Left ventricle myocardium inferior (tissue), 1 donor: ENCODE measurements at regions of chr13 and their contacts with region 1.

Region 1: DNA sequence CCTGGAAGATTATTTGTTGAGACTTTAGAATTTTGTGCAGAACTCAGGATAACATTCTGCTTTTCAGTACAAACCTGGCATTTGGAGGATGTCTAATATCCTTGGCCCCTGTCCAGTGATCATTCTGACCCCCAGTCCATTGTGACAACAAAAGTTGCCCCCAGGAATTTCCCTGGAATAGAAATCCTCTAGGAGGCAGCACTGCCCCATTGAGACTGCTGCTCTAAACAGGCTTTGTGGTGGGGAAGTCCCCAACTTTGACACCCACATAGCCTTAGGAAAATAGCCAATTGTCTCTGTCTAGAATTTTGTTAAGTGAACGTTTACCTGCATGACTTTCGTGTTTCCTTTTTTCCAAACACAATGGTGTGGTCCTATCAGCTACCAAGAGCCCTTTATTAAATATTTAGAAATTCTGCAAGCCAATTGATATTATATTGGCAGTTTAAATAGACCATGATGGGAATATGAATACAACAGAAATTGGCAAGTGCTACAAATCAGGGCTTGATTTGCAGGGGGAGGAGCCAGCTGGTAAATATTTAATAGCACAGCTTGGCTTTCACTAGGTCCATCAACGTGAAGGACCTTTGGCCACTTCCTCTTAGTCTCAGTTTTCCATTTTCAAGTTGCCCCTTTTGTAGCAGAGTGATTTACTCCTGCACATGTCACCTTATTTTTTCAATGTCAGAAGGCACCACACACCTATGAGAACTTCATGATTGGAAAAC is 451.7 kb downstream of the EFNB2 start:
- DNase-seq: no peak
- H3K4me3 ChIP-seq: no peak overlapping the region
- H3K27ac ChIP-seq: no peak overlapping the region
- H3K4me1 ChIP-seq: no peaks in the 10 kb centered on the region
- H3K27me3 ChIP-seq: peaks cover 15% of the 10 kb centered on the region
- CTCF ChIP-seq: peak; percentile 69

Region 2: GRCh38 chr13:106493533-106494220 is 409.9 kb after region 1 on chr13:
- intact Hi-C with region 1: no loop called
- DNase-seq: no peak
- H3K4me3 ChIP-seq: no peak overlapping the region
- H3K27ac ChIP-seq: peak overlapping the region; percentile 55
- H3K4me1 ChIP-seq: peaks cover 73% of the 10 kb centered on the region
- H3K27me3 ChIP-seq: no peaks in the 10 kb centered on the region
- CTCF ChIP-seq: no peak

Region 3: DNA sequence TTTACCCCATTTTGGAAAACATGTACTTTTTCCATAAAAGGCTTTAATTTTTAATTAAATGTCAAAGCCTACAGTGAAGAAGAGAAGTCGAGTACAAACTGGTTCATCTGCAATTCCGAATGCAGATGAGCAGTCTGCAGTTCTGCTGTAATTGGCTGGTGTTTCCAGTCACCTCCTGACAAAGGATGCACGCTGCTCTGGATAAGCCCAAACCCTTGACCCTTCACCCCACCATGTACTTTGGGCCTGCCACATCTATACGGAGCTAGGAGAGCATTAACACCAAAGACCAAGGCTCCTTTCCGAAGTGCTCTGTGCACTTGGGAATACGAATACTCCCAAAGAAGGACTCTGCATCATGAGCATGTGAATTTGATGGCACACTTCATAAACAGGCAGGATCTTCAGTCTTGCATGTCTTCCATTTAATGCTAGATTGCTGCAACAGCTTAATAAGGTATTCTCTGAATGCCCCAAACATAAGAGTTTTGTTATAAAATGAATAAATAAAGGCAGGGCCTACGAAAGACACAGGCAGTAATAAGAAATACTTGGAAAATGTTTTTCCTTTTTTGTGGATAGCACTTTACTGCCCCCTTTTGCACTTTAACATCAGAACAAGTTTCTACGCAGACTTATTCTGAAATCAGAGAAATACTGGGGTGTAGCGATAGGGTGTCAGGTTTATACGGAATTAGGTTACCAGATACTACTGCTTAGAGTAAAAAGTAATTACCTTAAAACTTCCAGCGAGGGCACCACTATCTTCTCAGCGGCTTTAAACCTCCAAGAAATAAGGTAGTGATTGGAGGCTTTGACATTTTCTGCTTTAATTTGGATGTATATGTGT is 436.6 kb after region 1 on chr13:
- intact Hi-C with region 1: loop called (anchors 10 kb)
- DNase-seq: no peak
- H3K4me3 ChIP-seq: no peak overlapping the region
- H3K27ac ChIP-seq: no peak overlapping the region
- H3K4me1 ChIP-seq: peaks cover 37% of the 10 kb centered on the region
- H3K27me3 ChIP-seq: no peaks in the 10 kb centered on the region
- CTCF ChIP-seq: peak; percentile 63